ENCODE measurements at regions of chr9 and their contacts with region 1.

Region 1: GRCh38 chr9:110638381-110638954 is 30.1 kb upstream of the MUSK start:
- DNase-seq: no peak
- ATAC-seq: no peak
- H3K4me3 ChIP-seq: no peak overlapping the region
- H3K27ac ChIP-seq: no peak overlapping the region
- H3K4me1 ChIP-seq: no peaks in the 10 kb centered on the region
- H3K27me3 ChIP-seq: no peaks in the 10 kb centered on the region
- CTCF ChIP-seq: no peak; the same call in 1 of the 2 replicates

Region 2: DNA sequence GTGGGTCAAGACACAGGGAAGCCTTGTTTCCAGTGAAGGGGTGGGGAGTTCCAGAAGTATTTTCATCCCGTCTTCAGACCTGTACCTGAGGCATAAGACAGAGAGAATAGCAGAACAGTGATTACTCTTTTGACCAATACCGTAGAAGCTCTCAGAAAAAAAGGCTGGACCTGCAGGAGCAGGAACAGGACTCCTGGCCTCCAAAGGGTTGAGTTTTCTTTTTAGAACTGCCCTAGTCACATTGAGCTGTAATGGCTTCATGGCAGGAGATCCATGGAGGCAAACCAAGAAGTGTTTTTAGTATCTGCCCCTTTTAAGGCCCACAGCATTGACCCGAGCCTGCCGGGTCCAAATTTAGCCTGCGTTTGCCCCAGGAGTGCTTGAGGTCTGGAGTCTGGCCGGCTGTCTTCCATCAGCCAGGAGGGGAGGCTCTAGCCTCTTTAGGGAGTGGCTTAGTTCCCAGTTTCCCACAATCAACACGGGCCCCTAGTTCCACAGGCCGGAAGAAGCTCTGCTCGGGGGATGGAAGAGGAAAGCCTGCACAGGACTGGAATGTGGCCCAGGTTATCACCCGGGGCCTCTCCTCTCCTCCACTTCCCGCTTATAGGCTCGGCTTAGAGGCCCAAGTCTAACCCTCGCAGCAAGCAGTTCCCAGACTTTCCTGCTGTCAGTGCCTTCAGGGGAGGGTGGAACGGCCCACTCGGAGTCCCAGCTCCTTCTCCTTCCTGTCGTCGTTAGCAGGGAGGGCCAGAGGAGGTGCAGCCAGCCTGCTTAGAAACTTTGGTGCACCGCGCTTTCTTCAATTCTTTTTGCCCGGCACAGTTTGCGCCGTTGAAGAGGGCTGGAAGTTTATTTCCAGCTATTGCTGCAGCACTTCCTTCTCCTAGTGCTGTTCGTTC is 511.3 kb before region 1 on chr9:
- CTCF ChIA-PET with region 1: no interaction called
- POLR2A ChIA-PET with region 1: no interaction called
- in situ Hi-C with region 1: no loop called
- intact Hi-C with region 1: no loop called
- DNase-seq: no peak
- ATAC-seq: peak; percentile 85
- H3K4me3 ChIP-seq: peak overlapping the region; percentile 40 to 66
- H3K27ac ChIP-seq: peak overlapping the region; percentile 77
- H3K4me1 ChIP-seq: peaks cover 5% of the 10 kb centered on the region; the same call in 1 of the 2 replicates
- H3K27me3 ChIP-seq: no peaks in the 10 kb centered on the region
- CTCF ChIP-seq: no peak

Region 3: GRCh38 chr9:110700953-110701352 is 62.5 kb after region 1 on chr9:
- CTCF ChIA-PET with region 1: no interaction called
- POLR2A ChIA-PET with region 1: no interaction called
- in situ Hi-C with region 1: no loop called
- intact Hi-C with region 1: no loop called
- DNase-seq: peak; percentile 8
- ATAC-seq: no peak
- H3K4me3 ChIP-seq: no peak overlapping the region
- H3K27ac ChIP-seq: no peak overlapping the region
- H3K4me1 ChIP-seq: no peaks in the 10 kb centered on the region
- H3K27me3 ChIP-seq: no peaks in the 10 kb centered on the region
- CTCF ChIP-seq: no peak

Region 4: GRCh38 chr9:110744753-110745384 is 106.4 kb after region 1 on chr9:
- CTCF ChIA-PET with region 1: no interaction called
- POLR2A ChIA-PET with region 1: no interaction called
- in situ Hi-C with region 1: no loop called
- intact Hi-C with region 1: loop called (anchors 10 kb)
- DNase-seq: peak; percentile 92
- ATAC-seq: peak; percentile 98
- H3K4me3 ChIP-seq: no peak overlapping the region
- H3K27ac ChIP-seq: peak overlapping the region; percentile 87
- H3K4me1 ChIP-seq: peaks cover 24% of the 10 kb centered on the region
- H3K27me3 ChIP-seq: no peaks in the 10 kb centered on the region
- CTCF ChIP-seq: no peak

Region 5: GRCh38 chr9:111298731-111299598 is 660.5 kb after region 1 on chr9:
- CTCF ChIA-PET with region 1: no interaction called
- POLR2A ChIA-PET with region 1: no interaction called
- in situ Hi-C with region 1: no loop called
- intact Hi-C with region 1: loop called (anchors 2 kb)
- DNase-seq: peak; percentile 35
- ATAC-seq: peak; percentile 84
- H3K4me3 ChIP-seq: no peak overlapping the region
- H3K27ac ChIP-seq: peak overlapping the region; percentile 17; the same call in 1 of the 2 replicates
- H3K4me1 ChIP-seq: peaks cover 6% of the 10 kb centered on the region; the same call in 1 of the 2 replicates
- H3K27me3 ChIP-seq: no peaks in the 10 kb centered on the region
- CTCF ChIP-seq: peak; percentile 62; the same call in 1 of the 2 replicates

Measured in Panc1 (cell line).